Mammary epithelial cell (primary cell): ENCODE measurements at regions of chr16 and their contacts with region 1.

Region 1: GRCh38 chr16:62149631-62150030 is 113.4 kb upstream of the CDH8 start:
- DNase-seq: peak; percentile 47
- H3K4me3 ChIP-seq: no peak overlapping the region
- H3K27ac ChIP-seq: no peak overlapping the region
- H3K4me1 ChIP-seq: peaks cover 9% of the 10 kb centered on the region
- H3K27me3 ChIP-seq: no peaks in the 10 kb centered on the region
- CTCF ChIP-seq: no peak

Region 2: DNA sequence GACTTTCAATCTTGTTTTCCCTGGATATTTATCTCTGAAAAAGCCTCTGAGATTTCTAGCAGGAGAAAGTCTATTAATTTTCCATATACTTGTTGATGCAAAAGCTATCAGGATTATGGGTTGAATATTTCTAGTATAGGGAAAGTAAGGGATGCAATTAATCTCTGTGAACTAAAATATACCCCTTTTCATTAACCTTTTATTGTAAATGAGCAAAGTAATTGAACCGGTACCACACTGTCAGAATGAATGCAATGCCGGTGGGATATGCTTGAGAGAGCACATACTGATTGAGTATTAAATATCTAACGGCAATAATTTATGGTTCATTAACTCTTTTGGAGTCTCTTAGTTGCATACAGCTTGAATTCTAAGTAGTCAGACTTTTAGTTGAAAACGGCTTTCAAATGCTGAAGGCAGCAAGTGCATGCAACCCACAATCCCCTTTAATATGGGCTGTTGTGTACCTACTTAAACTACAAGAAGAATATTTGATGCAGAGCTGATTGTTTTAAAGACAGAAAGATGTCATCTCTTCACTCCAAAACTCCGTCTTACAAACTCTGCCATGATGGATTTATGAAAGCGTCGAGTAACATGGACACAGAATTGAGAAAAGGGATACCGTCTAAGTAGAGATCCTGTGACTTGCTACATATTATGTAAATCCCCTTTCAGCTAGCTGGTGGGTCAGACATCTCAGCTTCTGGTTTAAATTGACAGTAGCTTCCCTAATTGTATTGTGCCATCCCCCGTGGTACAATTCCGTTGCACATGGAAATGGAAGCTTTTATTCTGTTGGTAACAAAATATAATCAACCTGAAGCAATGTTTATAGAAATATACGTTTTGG is 27.9 kb after region 1 on chr16:
- CTCF ChIA-PET with region 1: no interaction called
- dilution Hi-C with region 1: no loop called
- in situ Hi-C with region 1: no loop called
- intact Hi-C with region 1: loop called (anchors 1 kb)
- DNase-seq: no peak
- H3K4me3 ChIP-seq: no peak overlapping the region
- H3K27ac ChIP-seq: no peak overlapping the region
- H3K4me1 ChIP-seq: no peaks in the 10 kb centered on the region
- H3K27me3 ChIP-seq: no peaks in the 10 kb centered on the region
- CTCF ChIP-seq: no peak

Region 3: GRCh38 chr16:62190426-62190825 is 40.8 kb after region 1 on chr16:
- CTCF ChIA-PET with region 1: no interaction called
- dilution Hi-C with region 1: no loop called
- in situ Hi-C with region 1: no loop called
- intact Hi-C with region 1: no loop called
- DNase-seq: peak; percentile 17
- H3K4me3 ChIP-seq: no peak overlapping the region
- H3K27ac ChIP-seq: no peak overlapping the region
- H3K4me1 ChIP-seq: no peaks in the 10 kb centered on the region
- H3K27me3 ChIP-seq: no peaks in the 10 kb centered on the region
- CTCF ChIP-seq: peak; percentile 83 to 84